Calu3 (cell line): ENCODE measurements at regions of chr19 and their contacts with region 1.

Region 1: DNA sequence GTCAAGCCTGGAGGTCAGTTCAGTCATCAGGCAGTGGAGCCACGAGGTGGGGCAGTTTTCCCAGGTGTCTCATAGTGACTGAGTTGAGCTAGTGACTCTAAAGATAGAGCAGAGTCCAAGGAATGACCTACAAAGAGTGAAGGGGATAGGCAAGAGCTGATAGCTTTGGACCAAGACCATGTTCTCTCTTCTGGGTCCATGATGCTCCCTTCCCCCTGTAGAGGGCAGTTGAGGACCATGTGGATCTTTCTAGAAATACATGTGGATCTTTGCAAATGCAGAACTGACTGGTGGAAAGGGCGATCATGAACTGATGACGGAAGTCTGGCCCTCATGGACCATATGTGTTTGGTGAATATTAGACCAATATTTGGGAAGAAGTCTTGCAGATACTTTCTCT is 6.9 kb downstream of the PSG1 start:
- DNase-seq: no peak
- H3K4me3 Mint-ChIP-seq: no peak overlapping the region
- H3K27ac Mint-ChIP-seq: no peak overlapping the region
- H3K4me1 Mint-ChIP-seq: peaks cover 51% of the 10 kb centered on the region
- H3K27me3 Mint-ChIP-seq: no peaks in the 10 kb centered on the region
- CTCF ChIP-seq: no peak

Region 2: GRCh38 chr19:42762782-42763181 is 109.8 kb before region 1 on chr19:
- CTCF ChIA-PET with region 1: interaction called, 11 read pairs
- intact Hi-C with region 1: no loop called
- DNase-seq: no peak
- H3K4me3 Mint-ChIP-seq: no peak overlapping the region
- H3K27ac Mint-ChIP-seq: peak overlapping the region; percentile 41
- H3K4me1 Mint-ChIP-seq: peaks cover 74% of the 10 kb centered on the region
- H3K27me3 Mint-ChIP-seq: no peaks in the 10 kb centered on the region
- CTCF ChIP-seq: no peak

Region 3: GRCh38 chr19:42831271-42832019 is 41.1 kb before region 1 on chr19:
- CTCF ChIA-PET with region 1: no interaction called
- intact Hi-C with region 1: no loop called
- DNase-seq: peak; percentile 72
- H3K4me3 Mint-ChIP-seq: no peak overlapping the region
- H3K27ac Mint-ChIP-seq: peak overlapping the region; percentile 76
- H3K4me1 Mint-ChIP-seq: peaks cover 30% of the 10 kb centered on the region
- H3K27me3 Mint-ChIP-seq: no peaks in the 10 kb centered on the region
- CTCF ChIP-seq: no peak

Region 4: GRCh38 chr19:43132696-43133095 is 260.1 kb after region 1 on chr19:
- CTCF ChIA-PET with region 1: no interaction called
- intact Hi-C with region 1: no loop called
- DNase-seq: no peak
- H3K4me3 Mint-ChIP-seq: no peak overlapping the region
- H3K27ac Mint-ChIP-seq: no peak overlapping the region
- H3K4me1 Mint-ChIP-seq: peaks cover 31% of the 10 kb centered on the region
- H3K27me3 Mint-ChIP-seq: peaks cover 4% of the 10 kb centered on the region
- CTCF ChIP-seq: no peak